RWPE1 (cell line): ENCODE measurements at regions of chr5 and their contacts with region 1.

Region 1: DNA sequence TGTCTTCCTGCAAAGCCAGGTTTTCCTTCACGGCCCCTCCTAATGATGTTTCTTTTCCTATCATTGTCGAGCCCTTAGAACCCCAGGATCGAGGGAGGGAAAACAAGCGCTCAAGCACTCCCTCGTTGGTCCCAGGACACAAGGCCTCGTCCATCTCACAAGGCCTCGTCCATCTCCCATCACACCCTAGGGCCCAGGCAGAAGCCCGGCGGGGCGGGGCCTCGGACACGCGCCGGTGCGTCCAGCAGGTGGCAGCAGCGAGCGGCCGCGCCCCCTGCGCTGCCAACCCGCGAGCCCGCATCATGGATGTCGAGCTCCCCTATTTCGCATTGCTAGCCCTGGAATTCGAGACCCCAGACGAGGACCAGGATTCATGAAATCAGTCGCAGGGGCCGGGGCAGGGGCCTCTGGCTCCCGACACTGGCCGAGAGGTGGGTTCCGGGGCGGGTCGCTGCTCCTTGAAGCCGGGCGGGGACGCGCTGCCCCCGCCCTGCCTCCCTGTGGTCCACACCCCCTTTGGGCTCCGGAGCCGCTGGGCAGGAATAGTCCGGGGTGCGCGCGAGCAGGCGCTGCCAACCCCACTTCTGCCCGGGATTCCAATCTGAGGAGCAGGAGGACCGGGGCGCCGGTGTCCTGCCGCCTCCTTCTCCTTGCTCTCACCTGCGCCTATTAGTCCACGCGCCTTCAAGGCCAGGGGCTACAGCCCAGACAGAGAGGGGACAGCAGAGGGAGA is at the start of gene ABLIM3:
- DNase-seq: peak; percentile 89
- H3K27ac ChIP-seq: peak within 1 kb of the TSS; percentile 40
- CTCF ChIP-seq: peak; percentile 99

Region 2: GRCh38 chr5:149228618-149229297 is 87.4 kb after region 1 on chr5:
- CTCF ChIA-PET with region 1: interaction called, 55 read pairs
- POLR2A ChIA-PET with region 1: no interaction called
- DNase-seq: peak; percentile 90
- H3K27ac ChIP-seq: no peak overlapping the region
- CTCF ChIP-seq: peak; percentile 77

Region 3: DNA sequence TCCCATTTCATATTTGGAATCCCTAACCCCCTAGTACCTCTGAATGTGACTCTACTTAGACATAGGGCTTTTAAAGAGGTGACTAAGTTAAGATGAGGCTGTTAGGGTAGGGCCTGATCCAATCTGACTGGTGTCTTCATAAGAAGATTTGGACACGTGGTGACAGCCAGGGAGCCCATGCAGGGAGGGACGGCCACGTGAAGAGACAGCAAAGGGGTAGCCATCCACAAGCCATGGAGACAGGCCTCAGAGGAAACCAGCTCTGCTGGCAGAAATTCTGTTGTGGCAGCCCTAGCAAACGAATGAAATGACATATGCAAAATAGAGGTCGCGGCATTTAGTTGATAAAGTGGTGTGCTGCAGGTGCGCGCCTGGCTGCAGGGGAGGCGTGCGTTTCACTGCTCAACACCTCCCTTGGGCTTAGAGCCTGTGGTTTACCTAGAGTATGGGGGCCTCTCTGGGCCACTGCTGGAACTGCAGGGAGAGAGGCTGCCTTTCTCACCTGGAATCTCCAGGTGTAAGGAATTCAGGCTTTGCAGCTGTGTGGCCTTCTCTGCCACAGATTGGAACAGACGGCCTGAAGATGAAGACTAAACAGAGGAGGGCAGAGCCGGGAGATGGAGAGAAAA is 123.2 kb after region 1 on chr5:
- CTCF ChIA-PET with region 1: interaction called, 15 read pairs
- POLR2A ChIA-PET with region 1: no interaction called
- DNase-seq: peak; percentile 77
- H3K27ac ChIP-seq: no peak overlapping the region
- CTCF ChIP-seq: peak; percentile 64

Region 4: GRCh38 chr5:149357370-149358293 is 216.2 kb after region 1 on chr5 and contains the start of gene PCYOX1L:
- CTCF ChIA-PET with region 1: no interaction called
- POLR2A ChIA-PET with region 1: no interaction called
- DNase-seq: peak; percentile 100
- H3K27ac ChIP-seq: peak within 1 kb of the TSS; percentile 55
- CTCF ChIP-seq: no peak